HCT116 (cell line): ENCODE measurements at regions of chr7 and their contacts with region 1.

Region 1: GRCh38 chr7:100101016-100101862 is at the starts of genes AP4M1 and MCM7:
- DNase-seq: peak; percentile 96
- ATAC-seq: peak; percentile 87
- H3K4me3 ChIP-seq: peak within 1 kb of the TSS; percentile 90 to 94
- H3K27ac ChIP-seq: peak within 1 kb of the TSS; percentile 88
- H3K4me1 ChIP-seq: peaks cover 6 to 24% of the 10 kb centered on the region in 2 experiments; a peak in 3 of 4 replicates
- H3K27me3 ChIP-seq: no peaks in the 10 kb centered on the region
- CTCF ChIP-seq: no peak
- POLR2A ChIP-seq: no peak
- RAD21 ChIP-seq: no peak
- total RNA-seq, gene AP4M1: 20.0 TPM
- total RNA-seq, gene MCM7: 387 TPM

Region 2: GRCh38 chr7:100049441-100050311 is 51.6 kb before region 1 on chr7 and contains the start of gene ZSCAN21:
- CTCF ChIA-PET with region 1: no interaction called
- POLR2A ChIA-PET with region 1: interaction called, 4 read pairs
- RAD21 ChIA-PET with region 1: no interaction called
- intact Hi-C with region 1: loop called (anchors 2 kb)
- DNase-seq: peak; percentile 38
- ATAC-seq: peak; percentile 90
- H3K4me3 ChIP-seq: peak within 1 kb of the TSS; percentile 78 to 82
- H3K27ac ChIP-seq: peak within 1 kb of the TSS; percentile 77
- H3K4me1 ChIP-seq: peaks cover 10 to 16% of the 10 kb centered on the region in 2 experiments; a peak in 2 of 4 replicates
- H3K27me3 ChIP-seq: no peaks in the 10 kb centered on the region
- CTCF ChIP-seq: 0 out of 6 replicates have a peak, but pooled peaks of 1 of the 3 experiments have one; percentile 16
- POLR2A ChIP-seq: peak; percentile 54
- RAD21 ChIP-seq: peak; percentile 28; the same call in 1 of the 2 replicates
- total RNA-seq, gene ZSCAN21: 10.3 TPM

Region 3: DNA sequence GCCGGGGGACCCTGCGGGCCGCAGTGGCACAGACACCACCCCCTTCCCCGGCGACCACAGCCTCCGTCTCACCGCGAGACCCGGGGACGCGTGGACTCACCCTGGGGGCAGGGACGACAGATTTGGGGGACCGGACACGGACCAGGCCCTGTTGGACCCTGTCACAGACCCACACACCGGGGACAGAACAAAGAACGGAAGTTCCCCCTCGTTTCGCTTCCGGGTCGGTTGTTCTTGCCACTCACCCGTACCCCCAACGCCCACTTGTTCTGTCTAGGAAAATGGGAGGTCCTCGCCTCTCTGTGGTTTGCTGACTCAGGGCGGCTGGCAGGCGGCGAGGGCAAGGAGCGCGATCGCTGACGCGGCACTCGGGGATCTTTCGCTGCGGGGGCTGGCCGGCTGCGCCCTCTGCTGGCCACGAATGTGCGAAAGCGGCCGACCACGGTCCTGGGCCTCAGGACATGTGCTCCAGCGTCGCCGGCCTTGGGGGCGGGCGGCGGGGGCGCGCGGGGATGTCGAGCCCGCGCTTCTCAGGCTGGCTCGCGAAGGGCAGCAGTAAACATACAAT is 19.6 kb before region 1 on chr7 and contains the start of gene ZNF3:
- CTCF ChIA-PET with region 1: interaction called, 3 read pairs
- POLR2A ChIA-PET with region 1: interaction called, 18 read pairs
- RAD21 ChIA-PET with region 1: interaction called in 1 of 2 experiments, 3 read pairs
- intact Hi-C with region 1: no loop called
- DNase-seq: peak; percentile 98
- ATAC-seq: peak; percentile 91
- H3K4me3 ChIP-seq: peak within 1 kb of the TSS; percentile 69 to 77
- H3K27ac ChIP-seq: peak within 1 kb of the TSS; percentile 72
- H3K4me1 ChIP-seq: peaks cover 11 to 24% of the 10 kb centered on the region in 2 experiments
- H3K27me3 ChIP-seq: no peaks in the 10 kb centered on the region
- CTCF ChIP-seq: peak in 2 of 3 experiments; percentile 84 to 85; a peak in 4 of 6 replicates
- POLR2A ChIP-seq: peak; percentile 58
- RAD21 ChIP-seq: no peak
- total RNA-seq, gene ZNF3: 28.2 TPM

Region 4: GRCh38 chr7:100088621-100089457 is 12.4 kb before region 1 on chr7 and contains the start of gene COPS6:
- CTCF ChIA-PET with region 1: interaction called, 4 read pairs
- POLR2A ChIA-PET with region 1: interaction called, 11 read pairs
- RAD21 ChIA-PET with region 1: no interaction called
- intact Hi-C with region 1: loop called (anchors 1 kb)
- DNase-seq: no peak
- ATAC-seq: peak; percentile 45
- H3K4me3 ChIP-seq: peak within 1 kb of the TSS; percentile 91 to 93
- H3K27ac ChIP-seq: peak within 1 kb of the TSS; percentile 90
- H3K4me1 ChIP-seq: peaks cover 8 to 38% of the 10 kb centered on the region in 2 experiments
- H3K27me3 ChIP-seq: no peaks in the 10 kb centered on the region
- CTCF ChIP-seq: no peak
- POLR2A ChIP-seq: peak; percentile 88
- RAD21 ChIP-seq: no peak
- total RNA-seq, gene COPS6: 126 TPM

Region 5: GRCh38 chr7:100126931-100127865 is 26.0 kb after region 1 on chr7 and contains the start of gene MBLAC1:
- CTCF ChIA-PET with region 1: interaction called, 11 read pairs
- POLR2A ChIA-PET with region 1: interaction called, 16 read pairs
- RAD21 ChIA-PET with region 1: interaction called in 1 of 2 experiments, 3 read pairs
- intact Hi-C with region 1: no loop called
- DNase-seq: peak; percentile 87
- ATAC-seq: peak; percentile 70
- H3K4me3 ChIP-seq: peak within 1 kb of the TSS; percentile 78 to 87
- H3K27ac ChIP-seq: peak within 1 kb of the TSS; percentile 98
- H3K4me1 ChIP-seq: peaks cover 37 to 54% of the 10 kb centered on the region in 2 experiments
- H3K27me3 ChIP-seq: no peaks in the 10 kb centered on the region
- CTCF ChIP-seq: no peak
- POLR2A ChIP-seq: peak; percentile 92
- RAD21 ChIP-seq: no peak
- total RNA-seq, gene MBLAC1: 2.0 TPM

Region 6: GRCh38 chr7:100132697-100133151 is 31.5 kb after region 1 on chr7:
- CTCF ChIA-PET with region 1: interaction called, 11 read pairs
- POLR2A ChIA-PET with region 1: no interaction called
- RAD21 ChIA-PET with region 1: interaction called in 1 of 2 experiments, 3 read pairs
- intact Hi-C with region 1: no loop called
- DNase-seq: no peak
- ATAC-seq: peak; percentile 81
- H3K4me3 ChIP-seq: no peak overlapping the region
- H3K27ac ChIP-seq: no peak overlapping the region
- H3K4me1 ChIP-seq: peaks cover 29 to 33% of the 10 kb centered on the region in 2 experiments
- H3K27me3 ChIP-seq: no peaks in the 10 kb centered on the region
- CTCF ChIP-seq: peak in 2 of 3 experiments; percentile 93 to 98; a peak in 4 of 6 replicates
- POLR2A ChIP-seq: no peak
- RAD21 ChIP-seq: no peak